ENCODE measurements at regions of chr5 and their contacts with region 1.

Region 1: DNA sequence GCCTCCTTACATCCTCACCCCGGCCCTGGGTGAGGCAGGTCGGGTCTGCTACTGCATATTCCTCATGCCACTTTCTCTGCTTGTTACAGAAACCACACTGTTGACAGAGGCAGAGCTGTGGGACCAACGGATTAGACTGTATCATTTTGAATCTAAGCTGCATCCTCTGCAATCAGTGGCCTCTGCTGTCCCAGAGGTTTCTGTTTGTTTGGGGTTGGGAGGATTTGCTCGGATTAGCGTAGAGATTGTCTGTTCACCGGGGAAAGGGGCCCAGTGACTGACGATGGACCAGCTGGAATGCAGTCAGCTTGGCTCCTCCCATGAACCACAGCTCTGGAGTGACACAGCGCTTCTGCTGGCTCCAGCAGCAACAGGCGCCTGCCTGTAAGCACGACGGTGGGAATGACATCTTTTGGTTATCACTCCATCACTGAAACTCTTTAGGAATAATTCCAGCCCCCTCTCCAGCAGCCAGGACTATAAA is 37.3 kb upstream of the ADRA1B start:
- DNase-seq: no peak
- H3K4me3 Mint-ChIP-seq: no peak overlapping the region
- H3K27ac Mint-ChIP-seq: no peak overlapping the region
- H3K4me1 Mint-ChIP-seq: no peaks in the 10 kb centered on the region
- H3K27me3 Mint-ChIP-seq: peaks cover 12% of the 10 kb centered on the region

Region 2: GRCh38 chr5:159628703-159629102 is 250.3 kb before region 1 on chr5:
- intact Hi-C with region 1: no loop called
- DNase-seq: no peak
- H3K4me3 Mint-ChIP-seq: no peak overlapping the region
- H3K27ac Mint-ChIP-seq: no peak overlapping the region
- H3K4me1 Mint-ChIP-seq: no peaks in the 10 kb centered on the region
- H3K27me3 Mint-ChIP-seq: peaks cover 3% of the 10 kb centered on the region

Region 3: DNA sequence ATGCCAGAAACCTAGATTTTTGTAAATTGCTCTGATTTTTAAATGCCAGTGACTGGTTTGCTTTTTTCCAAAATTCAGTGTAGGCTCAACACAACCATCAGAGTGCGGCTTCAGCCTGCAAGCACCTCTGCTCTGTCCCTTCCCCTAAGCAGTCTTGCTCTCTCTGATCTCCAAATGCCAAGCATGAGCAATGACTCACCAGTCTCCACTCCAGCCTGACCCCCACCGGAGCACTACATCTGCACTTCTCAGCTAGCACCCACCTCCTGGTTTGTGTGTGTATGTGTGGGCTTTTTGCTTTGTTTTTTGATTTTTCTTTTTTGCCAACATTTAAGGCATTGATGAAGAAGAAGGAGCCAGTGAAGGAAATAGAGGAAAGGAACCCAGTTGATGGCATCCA is 24.1 kb before region 1 on chr5:
- intact Hi-C with region 1: no loop called
- DNase-seq: no peak
- H3K4me3 Mint-ChIP-seq: no peak overlapping the region
- H3K27ac Mint-ChIP-seq: no peak overlapping the region
- H3K4me1 Mint-ChIP-seq: no peaks in the 10 kb centered on the region
- H3K27me3 Mint-ChIP-seq: peaks cover 3% of the 10 kb centered on the region

Region 4: DNA sequence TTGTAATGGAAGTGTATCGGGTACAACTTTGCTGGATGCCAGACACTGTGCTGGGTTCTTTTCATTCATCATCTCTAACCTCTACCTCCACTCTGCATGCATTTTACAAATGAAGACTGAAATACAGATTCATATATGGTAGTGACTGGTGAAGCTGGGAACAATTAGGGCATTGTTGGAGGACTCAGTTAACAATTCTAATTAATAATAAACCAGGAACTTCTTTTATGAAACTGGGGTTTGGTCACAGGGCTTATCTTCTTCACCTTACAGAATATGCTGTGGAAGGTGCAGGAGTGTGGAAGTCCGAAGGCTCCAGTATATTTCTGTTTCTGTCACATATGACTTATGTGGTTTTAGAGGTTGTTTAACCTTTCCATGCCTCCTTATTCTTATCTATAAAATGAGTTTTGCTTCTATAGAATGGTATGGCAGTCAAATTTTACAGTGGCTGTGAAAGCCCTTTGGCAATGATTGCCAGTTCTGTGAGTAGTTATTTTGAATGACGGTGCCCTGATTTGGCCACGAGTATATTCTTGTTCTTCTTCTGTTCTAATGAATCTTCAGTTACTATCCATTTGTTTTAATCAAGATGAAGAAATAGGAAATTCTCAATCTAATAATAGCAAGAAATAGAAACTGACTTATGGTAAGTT is 1382.8 kb after region 1 on chr5:
- intact Hi-C with region 1: loop called (anchors 10 kb)
- DNase-seq: no peak
- H3K4me3 Mint-ChIP-seq: no peak overlapping the region
- H3K27ac Mint-ChIP-seq: no peak overlapping the region
- H3K4me1 Mint-ChIP-seq: no peaks in the 10 kb centered on the region
- H3K27me3 Mint-ChIP-seq: no peaks in the 10 kb centered on the region

Measured in activated CD4-positive, alpha-beta T cell treated with anti-CD3 and anti-CD28 coated beads, Interleukin-2, amount 10 ng/mL, durations not matched to agents 24 days and 14 days (primary cell).